ENCODE measurements at regions of chr17 and their contacts with region 1.

Region 1: DNA sequence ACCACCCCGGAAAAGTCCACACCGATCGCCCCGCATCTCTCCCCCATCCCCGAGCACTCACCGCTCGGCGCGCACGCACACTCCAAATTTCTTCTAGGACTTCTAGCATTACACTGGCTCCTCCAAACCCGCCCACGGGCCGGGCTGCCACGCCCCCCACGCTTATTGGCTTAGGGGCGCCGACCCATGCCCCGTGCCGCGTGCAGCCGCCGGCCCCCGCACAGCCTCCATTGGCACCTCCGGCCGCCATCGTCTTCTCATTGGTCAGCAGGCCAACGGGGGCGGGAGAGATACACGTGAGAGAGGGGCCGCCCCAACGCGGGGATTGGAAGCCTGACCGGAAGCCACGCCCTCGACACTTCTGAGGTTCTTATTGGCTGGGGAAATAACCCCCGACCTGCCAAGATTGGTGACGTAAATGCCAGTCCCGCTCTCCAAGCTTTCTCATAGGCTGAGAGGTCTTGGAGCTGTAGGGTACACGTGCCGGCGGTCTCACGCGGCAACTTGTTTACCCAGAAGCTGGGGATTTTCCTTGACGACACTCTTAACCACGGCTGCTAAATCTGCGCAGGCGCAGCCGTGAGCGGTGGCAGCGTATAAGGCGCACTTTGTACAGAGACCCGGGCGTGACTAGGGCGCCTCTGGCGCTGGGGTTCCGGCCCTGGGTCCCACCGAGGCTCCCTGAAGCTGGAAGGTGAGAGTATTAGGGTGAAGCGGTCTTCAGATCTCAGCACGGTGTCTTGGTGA is 4.2 kb upstream of the PER1 start:
- DNase-seq: peak; percentile 100
- ATAC-seq: peak; percentile 69
- H3K4me3 ChIP-seq: peak overlapping the region; percentile 69
- H3K27ac ChIP-seq: peak overlapping the region; percentile 63
- H3K4me1 ChIP-seq: peaks cover 22% of the 10 kb centered on the region
- H3K27me3 ChIP-seq: no peaks in the 10 kb centered on the region
- CTCF ChIP-seq: 0 out of 2 replicates have a peak, but pooled peaks have one; percentile 26
- POLR2A ChIP-seq: peak; percentile 98
- RAD21 ChIP-seq: peak; percentile 44

Region 2: GRCh38 chr17:7239091-7240027 is 917.1 kb before region 1 on chr17 and contains the start of gene PHF23:
- CTCF ChIA-PET with region 1: no interaction called
- POLR2A ChIA-PET with region 1: no interaction called
- dilution Hi-C with region 1: no loop called
- in situ Hi-C with region 1: loop called (anchors 25 kb)
- intact Hi-C with region 1: no loop called
- DNase-seq: peak; percentile 99
- ATAC-seq: peak; percentile 70
- H3K4me3 ChIP-seq: peak within 1 kb of the TSS; percentile 98
- H3K27ac ChIP-seq: peak within 1 kb of the TSS; percentile 97
- H3K4me1 ChIP-seq: peaks cover 14% of the 10 kb centered on the region
- H3K27me3 ChIP-seq: no peaks in the 10 kb centered on the region
- CTCF ChIP-seq: no peak
- POLR2A ChIP-seq: no peak
- RAD21 ChIP-seq: no peak
- total RNA-seq, gene PHF23: 44.8 and 45.5 TPM in 2 replicates

Region 3: GRCh38 chr17:8079291-8080207 is 76.9 kb before region 1 on chr17:
- CTCF ChIA-PET with region 1: interaction called, 4 read pairs
- POLR2A ChIA-PET with region 1: no interaction called
- dilution Hi-C with region 1: no loop called
- in situ Hi-C with region 1: no loop called
- intact Hi-C with region 1: loop called (anchors 5 kb)
- DNase-seq: peak; percentile 33
- ATAC-seq: peak; percentile 98
- H3K4me3 ChIP-seq: peak overlapping the region; percentile 48
- H3K27ac ChIP-seq: no peak overlapping the region
- H3K4me1 ChIP-seq: 0 out of 2 replicates have a peak, but pooled peaks cover 1% of the 10 kb centered on the region
- H3K27me3 ChIP-seq: peaks cover 64% of the 10 kb centered on the region
- CTCF ChIP-seq: peak; percentile 77
- POLR2A ChIP-seq: no peak
- RAD21 ChIP-seq: peak; percentile 63

Region 4: DNA sequence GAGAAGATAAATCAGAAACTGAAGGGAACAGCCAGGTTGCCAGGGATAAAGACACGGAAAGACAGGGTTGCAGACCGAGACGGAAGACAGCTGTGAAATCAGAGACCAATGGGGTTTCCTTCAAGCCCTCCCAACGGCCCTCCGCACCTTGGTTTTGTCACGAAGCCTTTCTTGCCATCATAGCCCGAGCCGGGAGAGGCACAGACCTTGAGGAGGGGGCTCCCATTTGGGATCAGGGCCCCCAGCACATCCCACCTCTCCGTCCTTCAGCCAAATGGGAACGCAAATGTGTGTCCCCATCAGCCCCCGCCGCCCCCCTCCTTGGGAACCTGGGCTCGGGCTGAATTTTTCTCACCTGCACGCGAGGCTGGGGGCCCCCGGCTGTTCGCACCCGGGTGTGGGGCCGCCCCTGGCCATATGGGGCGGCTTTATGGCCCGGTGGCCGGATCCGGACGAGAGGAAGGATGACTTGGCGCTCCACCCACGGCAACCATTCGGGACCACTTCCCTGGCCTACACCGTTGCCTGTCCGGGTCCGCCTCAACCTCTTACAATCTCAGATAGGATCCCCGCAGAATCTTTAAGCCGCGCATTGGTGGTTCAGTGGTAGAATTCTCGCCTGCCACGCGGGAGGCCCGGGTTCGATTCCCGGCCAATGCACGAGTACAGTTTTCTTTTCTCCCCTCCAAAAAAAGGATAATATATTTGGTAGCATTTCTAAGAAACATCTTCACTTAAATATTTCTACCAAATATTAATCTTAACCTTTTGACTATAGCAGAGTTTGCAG is 31.1 kb before region 1 on chr17:
- CTCF ChIA-PET with region 1: interaction called, 3 read pairs
- POLR2A ChIA-PET with region 1: no interaction called
- dilution Hi-C with region 1: no loop called
- in situ Hi-C with region 1: no loop called
- intact Hi-C with region 1: loop called (anchors 1 kb)
- DNase-seq: peak; percentile 60
- ATAC-seq: peak; percentile 5
- H3K4me3 ChIP-seq: peak overlapping the region; percentile 73
- H3K27ac ChIP-seq: no peak overlapping the region
- H3K4me1 ChIP-seq: peaks cover 8% of the 10 kb centered on the region
- H3K27me3 ChIP-seq: no peaks in the 10 kb centered on the region
- CTCF ChIP-seq: no peak
- POLR2A ChIP-seq: no peak
- RAD21 ChIP-seq: no peak

Measured in IMR-90 (cell line).